Heart left ventricle (tissue), 16 donors: ENCODE measurements at regions of chr1 and their contacts with region 1.

Region 1: GRCh38 chr1:43559714-43560113 is 29.0 kb downstream of the PTPRF start:
- DNase-seq: no peak
- ATAC-seq: peak in 1 of 4 donors; percentile 11
- H3K4me3 ChIP-seq: no peak overlapping the region
- H3K27ac ChIP-seq: no peak overlapping the region
- H3K4me1 ChIP-seq: peaks cover 0 to 3% (median 0%) of the 10 kb centered on the region in 12 donors
- H3K27me3 ChIP-seq: no peaks in the 10 kb centered on the region
- CTCF ChIP-seq: no peak
- POLR2A ChIP-seq: no peak

Region 2: DNA sequence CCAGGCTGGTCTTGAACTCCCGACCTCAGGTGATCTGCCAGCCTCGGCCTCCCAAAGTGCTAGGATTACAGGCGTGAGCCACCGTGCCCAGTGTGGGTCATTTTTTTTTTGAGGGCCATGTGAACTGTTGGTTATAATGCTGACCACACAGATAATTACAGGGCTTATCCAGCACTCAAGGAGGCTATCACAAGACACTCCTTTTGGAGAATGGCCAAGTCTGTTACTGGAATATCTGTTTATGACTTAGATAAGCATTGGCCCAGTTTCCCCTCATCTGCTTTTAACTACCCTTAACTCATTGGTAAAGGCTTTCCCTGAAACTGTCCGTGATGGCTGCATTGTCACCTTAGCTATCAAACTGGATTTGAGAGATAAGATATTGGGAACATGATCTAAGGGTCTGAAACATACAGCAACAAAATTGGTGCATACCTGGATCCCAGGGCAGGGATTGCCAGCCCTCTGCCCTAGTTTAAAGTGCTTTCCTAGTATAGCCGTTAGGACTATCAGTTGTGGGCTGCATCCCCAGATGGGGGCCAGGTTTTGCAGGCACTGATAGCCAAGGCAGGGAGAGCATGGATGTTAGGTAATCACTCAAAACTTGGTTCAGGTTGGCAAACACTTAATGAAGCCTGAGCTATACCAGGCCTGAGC is 154.4 kb before region 1 on chr1:
- intact Hi-C with region 1: no loop called
- DNase-seq: no peak
- ATAC-seq: peak in 3 of 4 donors; percentile 31 to 39 (median 33)
- H3K4me3 ChIP-seq: no peak overlapping the region
- H3K27ac ChIP-seq: no peak overlapping the region
- H3K4me1 ChIP-seq: peaks cover 0 to 11% (median 2%) of the 10 kb centered on the region in 12 donors
- H3K27me3 ChIP-seq: no peaks in the 10 kb centered on the region
- CTCF ChIP-seq: no peak
- POLR2A ChIP-seq: no peak

Region 3: DNA sequence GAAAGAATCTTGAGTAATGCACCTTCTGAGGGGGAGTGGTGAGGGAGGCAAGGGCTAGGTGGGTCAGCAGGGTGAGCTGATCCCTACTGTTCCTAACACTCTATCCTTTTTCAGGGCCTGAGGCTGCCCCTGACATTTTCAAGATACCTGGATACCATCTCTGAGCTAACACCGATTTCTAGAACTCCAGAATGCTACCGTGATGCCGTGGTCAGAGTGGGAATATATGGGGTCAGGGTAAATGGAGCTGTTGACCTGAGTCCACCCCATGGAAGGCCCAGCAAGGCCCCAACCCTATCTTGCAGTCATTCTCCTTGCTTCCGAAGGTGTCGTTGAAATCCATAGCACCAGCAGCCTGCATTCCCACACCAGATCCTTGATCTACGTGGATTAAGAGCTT is 47.0 kb before region 1 on chr1:
- intact Hi-C with region 1: loop called in 1 of 10 experiments (anchors 2 kb)
- DNase-seq: no peak
- ATAC-seq: no peak
- H3K4me3 ChIP-seq: no peak overlapping the region
- H3K27ac ChIP-seq: no peak overlapping the region
- H3K4me1 ChIP-seq: no peaks in the 10 kb centered on the region
- H3K27me3 ChIP-seq: no peaks in the 10 kb centered on the region
- CTCF ChIP-seq: no peak
- POLR2A ChIP-seq: no peak

Region 4: DNA sequence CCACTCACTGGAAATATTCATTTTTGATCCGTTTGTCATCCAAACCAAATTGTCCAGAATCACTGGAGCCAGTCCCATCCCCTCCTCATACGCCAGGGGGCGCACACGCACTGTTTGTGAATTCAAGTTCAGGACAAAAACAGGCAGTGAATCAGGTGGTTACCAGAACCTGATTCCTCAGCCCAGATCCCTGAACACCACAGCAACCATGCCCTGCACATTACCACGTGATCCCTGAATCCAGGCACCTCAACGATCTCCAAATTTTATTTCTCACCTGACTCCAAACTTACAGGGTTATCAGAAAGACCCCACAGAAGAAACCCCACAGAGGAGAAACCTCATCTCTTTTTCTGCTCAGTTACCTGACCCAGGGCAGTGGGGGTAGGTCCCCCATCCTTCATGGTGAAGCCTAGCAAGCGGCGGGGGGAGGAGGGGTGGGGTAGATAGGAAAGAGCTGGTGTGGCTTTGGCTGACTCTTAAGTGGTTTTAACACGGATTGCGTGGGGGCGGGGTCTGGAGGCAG is 30.4 kb before region 1 on chr1:
- intact Hi-C with region 1: no loop called
- DNase-seq: peak; percentile 74 to 89 (median 79)
- ATAC-seq: peak; percentile 62 to 77 (median 75)
- H3K4me3 ChIP-seq: no peak overlapping the region
- H3K27ac ChIP-seq: peak overlapping the region in 1 of 12 donors; percentile 88
- H3K4me1 ChIP-seq: peaks cover 0 to 24% (median 4%) of the 10 kb centered on the region in 12 donors
- H3K27me3 ChIP-seq: peaks cover 0 to 27% (median 0%) of the 10 kb centered on the region in 9 donors
- CTCF ChIP-seq: peak; percentile 91 to 97 (median 95)
- POLR2A ChIP-seq: no peak

Region 5: DNA sequence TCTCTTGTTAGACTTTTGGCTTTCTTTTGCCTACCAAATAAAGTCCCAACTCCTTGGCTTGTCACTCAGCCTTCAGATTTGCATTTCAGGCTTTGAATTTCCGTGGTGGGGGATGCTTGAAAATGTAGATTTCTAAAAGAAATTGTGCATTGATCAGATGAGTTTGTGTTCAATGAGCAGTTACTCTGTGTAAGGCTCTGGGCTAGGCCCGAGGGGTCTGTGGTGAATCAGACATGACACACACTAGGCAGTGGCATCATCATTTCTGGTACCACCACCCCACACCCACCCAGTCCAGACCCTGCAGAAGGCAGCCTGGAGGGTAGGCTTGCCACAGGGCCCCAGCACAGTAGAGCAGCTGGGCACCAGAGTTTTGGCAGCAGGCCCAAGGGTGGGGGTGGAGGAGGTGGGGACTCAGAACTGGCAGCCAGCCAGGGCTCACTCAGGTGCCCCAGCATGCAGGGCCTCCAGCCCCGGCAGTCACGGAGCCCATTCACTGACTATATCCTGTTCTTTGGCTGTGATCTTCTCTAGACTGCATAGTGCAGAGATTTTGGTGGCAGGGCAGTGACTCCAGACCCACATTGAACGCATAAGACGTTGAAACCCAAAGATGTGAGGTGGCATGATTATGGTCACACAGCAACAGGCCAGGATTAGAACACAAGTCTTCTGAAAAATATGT is 276.7 kb after region 1 on chr1:
- intact Hi-C with region 1: no loop called
- DNase-seq: peak; percentile 59 to 79 (median 67)
- ATAC-seq: peak; percentile 59 to 86 (median 71)
- H3K4me3 ChIP-seq: no peak overlapping the region
- H3K27ac ChIP-seq: no peak overlapping the region
- H3K4me1 ChIP-seq: peaks cover 0 to 57% (median 21%) of the 10 kb centered on the region in 12 donors
- H3K27me3 ChIP-seq: no peaks in the 10 kb centered on the region
- CTCF ChIP-seq: no peak
- POLR2A ChIP-seq: no peak